B cell (primary cell): ENCODE measurements at regions of chr17 and their contacts with region 1.

Region 1: GRCh38 chr17:7306911-7307686 is at the start of gene EIF5A:
- DNase-seq: peak; percentile 100
- ATAC-seq: peak; percentile 70
- H3K4me3 ChIP-seq: peak within 1 kb of the TSS; percentile 81 to 96 (median 94)
- H3K4me3 Mint-ChIP-seq: peak within 1 kb of the TSS; percentile 95
- H3K27ac ChIP-seq: peak within 1 kb of the TSS; percentile 98 to 99
- H3K27ac Mint-ChIP-seq: peak within 1 kb of the TSS; percentile 99
- H3K4me1 ChIP-seq: peaks cover 17 to 40% of the 10 kb centered on the region in 2 donors
- H3K4me1 Mint-ChIP-seq: peaks cover 39% of the 10 kb centered on the region
- H3K27me3 ChIP-seq: no peaks in the 10 kb centered on the region
- H3K27me3 Mint-ChIP-seq: no peaks in the 10 kb centered on the region
- CTCF ChIP-seq: no peak
- total RNA-seq, gene EIF5A: 233 and 236 TPM in 2 replicates

Region 2: DNA sequence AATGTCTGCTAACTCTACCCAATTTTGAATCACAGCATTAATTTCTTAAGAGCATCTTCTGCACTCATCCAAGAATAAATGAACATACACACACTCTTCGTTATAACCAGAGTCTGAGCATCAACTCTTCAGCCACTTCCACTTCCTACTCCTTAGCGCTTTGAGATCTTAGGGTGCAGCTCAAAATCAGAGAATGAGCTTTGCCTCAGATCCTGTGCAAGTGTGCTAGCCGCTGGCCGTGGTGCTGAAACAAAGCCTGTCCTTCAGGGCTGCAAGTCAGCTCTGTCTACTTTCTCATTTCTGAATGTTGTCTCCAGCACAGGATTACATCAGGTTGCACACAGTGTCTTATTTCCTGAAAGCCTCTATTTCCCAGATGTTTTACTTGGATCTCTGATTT is 1037.6 kb before region 1 on chr17:
- CTCF ChIA-PET with region 1: no interaction called
- POLR2A ChIA-PET with region 1: no interaction called
- intact Hi-C with region 1: no loop called
- DNase-seq: no peak
- ATAC-seq: no peak
- H3K4me3 ChIP-seq: no peak overlapping the region
- H3K4me3 Mint-ChIP-seq: no peak overlapping the region
- H3K27ac ChIP-seq: no peak overlapping the region
- H3K27ac Mint-ChIP-seq: no peak overlapping the region
- H3K4me1 ChIP-seq: no peaks in the 10 kb centered on the region
- H3K4me1 Mint-ChIP-seq: no peaks in the 10 kb centered on the region
- H3K27me3 ChIP-seq: no peaks in the 10 kb centered on the region
- H3K27me3 Mint-ChIP-seq: peaks cover 6% of the 10 kb centered on the region
- CTCF ChIP-seq: no peak

Region 3: DNA sequence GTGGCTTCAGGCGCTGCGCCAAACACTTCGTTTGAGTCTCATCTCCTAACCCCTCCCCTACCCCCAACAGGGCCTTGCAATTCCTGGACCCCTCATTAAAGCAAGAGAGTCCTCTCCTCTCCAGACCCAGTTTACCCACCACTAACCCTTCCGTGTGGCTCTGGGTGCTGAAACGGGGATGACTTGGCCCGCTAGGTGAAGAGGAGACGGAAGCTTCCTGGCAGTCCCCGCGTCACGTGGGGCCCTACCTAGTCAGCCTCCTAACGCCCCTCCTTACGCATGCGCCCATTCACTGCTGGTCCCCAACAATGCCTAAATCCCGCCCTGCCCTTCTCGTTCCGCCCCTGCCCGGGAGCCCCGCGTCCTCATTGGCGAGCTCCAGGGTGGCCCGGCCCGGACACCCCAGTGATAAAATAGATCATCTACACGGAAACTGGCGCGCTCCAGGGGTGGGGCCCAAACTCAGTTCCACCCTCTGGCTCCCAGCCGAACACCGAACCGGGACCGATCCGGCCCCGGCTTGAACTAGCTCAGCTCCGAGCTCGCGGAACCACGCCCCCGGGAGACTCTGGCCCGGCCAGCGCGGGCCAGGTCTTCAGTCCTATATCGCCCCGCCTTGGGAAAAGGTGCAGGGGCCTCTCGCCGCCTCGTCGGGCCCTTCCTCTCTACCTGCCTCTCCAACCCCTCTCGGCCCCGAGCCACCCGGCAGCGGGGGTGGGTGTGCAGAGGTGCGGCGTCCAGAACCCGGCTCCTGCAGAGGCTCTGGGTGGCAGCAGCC is 271.3 kb before region 1 on chr17 and contains the start of gene SLC16A13:
- CTCF ChIA-PET with region 1: no interaction called
- POLR2A ChIA-PET with region 1: no interaction called
- intact Hi-C with region 1: loop called (anchors 2 kb)
- DNase-seq: peak; percentile 99
- ATAC-seq: peak; percentile 94
- H3K4me3 ChIP-seq: peak within 1 kb of the TSS; percentile 58 to 97 (median 88)
- H3K4me3 Mint-ChIP-seq: peak within 1 kb of the TSS; percentile 94
- H3K27ac ChIP-seq: peak within 1 kb of the TSS; percentile 86 to 100
- H3K27ac Mint-ChIP-seq: peak within 1 kb of the TSS; percentile 98
- H3K4me1 ChIP-seq: peaks cover 18 to 38% of the 10 kb centered on the region in 2 donors
- H3K4me1 Mint-ChIP-seq: peaks cover 42% of the 10 kb centered on the region
- H3K27me3 ChIP-seq: no peaks in the 10 kb centered on the region
- H3K27me3 Mint-ChIP-seq: no peaks in the 10 kb centered on the region
- CTCF ChIP-seq: no peak
- total RNA-seq, gene SLC16A13: 21.7 and 21.9 TPM in 2 replicates

Region 4: GRCh38 chr17:7214300-7215135 is 92.6 kb before region 1 on chr17:
- CTCF ChIA-PET with region 1: no interaction called
- POLR2A ChIA-PET with region 1: no interaction called
- intact Hi-C with region 1: loop called (anchors 2 kb)
- DNase-seq: peak; percentile 99
- ATAC-seq: peak; percentile 85
- H3K4me3 ChIP-seq: peak overlapping the region; percentile 39 to 66 (median 53)
- H3K4me3 Mint-ChIP-seq: peak overlapping the region; percentile 97
- H3K27ac ChIP-seq: peak overlapping the region; percentile 77 to 90
- H3K27ac Mint-ChIP-seq: peak overlapping the region; percentile 99
- H3K4me1 ChIP-seq: peaks cover 25 to 50% of the 10 kb centered on the region in 2 donors
- H3K4me1 Mint-ChIP-seq: peaks cover 49% of the 10 kb centered on the region
- H3K27me3 ChIP-seq: peaks cover 0 to 4% (median 0%) of the 10 kb centered on the region in 4 experiments
- H3K27me3 Mint-ChIP-seq: peaks cover 5% of the 10 kb centered on the region
- CTCF ChIP-seq: peak; percentile 44

Region 5: DNA sequence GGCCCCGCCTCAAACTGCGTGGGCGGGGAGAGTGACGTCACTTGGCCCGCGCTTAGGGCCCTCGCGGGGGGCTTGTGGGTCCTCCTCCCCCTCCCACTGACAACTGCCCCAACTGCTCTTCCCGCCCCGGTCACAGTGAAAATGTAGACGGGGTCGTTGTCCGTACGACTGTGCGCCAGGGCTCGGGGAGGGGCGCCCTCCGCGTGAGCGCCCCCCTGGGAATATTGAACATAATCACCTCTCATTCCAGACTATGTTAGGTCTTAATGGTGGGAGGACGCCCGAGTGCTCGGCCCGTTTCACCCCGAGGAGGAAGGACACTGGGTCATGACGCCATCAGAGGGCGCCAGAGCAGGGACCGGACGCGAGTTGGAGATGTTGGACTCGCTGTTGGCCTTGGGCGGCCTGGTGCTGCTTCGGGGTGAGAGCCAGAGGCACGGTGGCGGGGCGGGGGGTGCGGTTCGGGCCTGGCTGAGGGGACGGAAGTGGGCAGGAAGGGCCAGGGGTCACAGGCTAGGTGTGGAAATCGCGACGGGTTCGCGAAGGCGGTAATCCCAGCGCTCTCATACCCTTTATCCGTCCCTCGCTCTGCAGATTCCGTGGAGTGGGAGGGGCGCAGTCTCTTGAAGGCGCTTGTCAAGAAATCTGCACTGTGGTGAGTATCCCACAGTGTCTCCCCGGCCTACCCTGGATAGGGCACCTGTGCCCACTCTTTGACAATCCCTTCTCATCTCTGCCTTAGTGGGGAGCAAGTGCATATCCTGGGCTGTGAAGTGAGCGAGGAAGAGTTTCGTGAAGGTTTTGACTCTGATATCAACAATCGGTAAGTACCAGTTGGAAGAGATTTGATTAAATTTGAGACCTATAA is 54.7 kb before region 1 on chr17 and contains the start of gene ELP5:
- CTCF ChIA-PET with region 1: no interaction called
- POLR2A ChIA-PET with region 1: interaction called, 3 read pairs
- intact Hi-C with region 1: loop called (anchors 1 kb)
- DNase-seq: peak; percentile 100
- ATAC-seq: peak; percentile 64
- H3K4me3 ChIP-seq: peak within 1 kb of the TSS; percentile 69 to 90 (median 78)
- H3K4me3 Mint-ChIP-seq: peak within 1 kb of the TSS; percentile 98
- H3K27ac ChIP-seq: peak within 1 kb of the TSS; percentile 98 to 100
- H3K27ac Mint-ChIP-seq: peak within 1 kb of the TSS; percentile 100
- H3K4me1 ChIP-seq: peaks cover 30 to 33% of the 10 kb centered on the region in 2 donors
- H3K4me1 Mint-ChIP-seq: peaks cover 44% of the 10 kb centered on the region
- H3K27me3 ChIP-seq: no peaks in the 10 kb centered on the region
- H3K27me3 Mint-ChIP-seq: no peaks in the 10 kb centered on the region
- CTCF ChIP-seq: no peak
- total RNA-seq, gene ELP5: 42.2 and 48.0 TPM in 2 replicates

Region 6: DNA sequence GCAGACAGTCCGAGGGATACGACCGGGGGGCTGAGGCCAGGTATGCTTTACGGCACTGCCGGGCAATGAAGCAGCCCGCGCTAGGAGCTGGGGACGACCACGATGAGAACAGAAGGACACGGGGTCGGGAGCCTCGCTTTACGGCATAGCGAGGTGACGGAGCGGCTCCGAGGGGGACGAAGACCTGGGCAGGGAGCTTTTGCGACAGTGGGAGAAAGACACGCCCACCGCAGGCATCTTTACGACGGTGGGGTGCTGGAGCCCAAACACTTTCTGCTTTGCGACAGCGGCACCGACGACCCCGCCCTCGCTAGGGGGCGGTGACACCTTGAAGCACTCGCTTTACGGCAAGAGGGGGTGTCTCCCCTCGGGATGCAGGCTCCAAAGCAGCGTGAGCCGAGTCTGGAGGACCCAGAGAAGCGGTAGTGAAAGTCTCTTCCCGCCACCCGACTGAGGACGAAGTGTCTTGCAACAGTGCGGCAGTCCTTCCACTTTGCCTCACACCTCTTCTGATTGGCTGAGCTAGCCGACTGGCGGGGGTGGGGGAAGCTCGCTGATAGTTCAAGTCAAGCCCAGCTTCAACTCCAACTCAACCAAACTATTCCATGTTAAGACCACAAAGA is 22.4 kb after region 1 on chr17:
- CTCF ChIA-PET with region 1: interaction called, 5 read pairs
- POLR2A ChIA-PET with region 1: interaction called, 18 read pairs
- intact Hi-C with region 1: loop called (anchors 1 kb)
- DNase-seq: peak; percentile 100
- ATAC-seq: peak; percentile 71
- H3K4me3 ChIP-seq: peak overlapping the region; percentile 65 to 92 (median 81)
- H3K4me3 Mint-ChIP-seq: peak overlapping the region; percentile 96
- H3K27ac ChIP-seq: peak overlapping the region; percentile 86 to 93
- H3K27ac Mint-ChIP-seq: peak overlapping the region; percentile 98
- H3K4me1 ChIP-seq: peaks cover 23 to 46% of the 10 kb centered on the region in 2 donors
- H3K4me1 Mint-ChIP-seq: peaks cover 40% of the 10 kb centered on the region
- H3K27me3 ChIP-seq: no peaks in the 10 kb centered on the region
- H3K27me3 Mint-ChIP-seq: no peaks in the 10 kb centered on the region
- CTCF ChIP-seq: no peak

Region 7: GRCh38 chr17:7454980-7455379 is 147.9 kb after region 1 on chr17:
- CTCF ChIA-PET with region 1: no interaction called
- POLR2A ChIA-PET with region 1: no interaction called
- intact Hi-C with region 1: loop called (anchors 5 kb)
- DNase-seq: no peak
- ATAC-seq: no peak
- H3K4me3 ChIP-seq: peak overlapping the region; percentile 55 to 99 (median 90)
- H3K4me3 Mint-ChIP-seq: peak overlapping the region; percentile 91
- H3K27ac ChIP-seq: no peak overlapping the region
- H3K27ac Mint-ChIP-seq: peak overlapping the region; percentile 81
- H3K4me1 ChIP-seq: peaks cover 5 to 10% of the 10 kb centered on the region in 2 donors
- H3K4me1 Mint-ChIP-seq: peaks cover 11% of the 10 kb centered on the region
- H3K27me3 ChIP-seq: no peaks in the 10 kb centered on the region
- H3K27me3 Mint-ChIP-seq: peaks cover 4% of the 10 kb centered on the region
- CTCF ChIP-seq: no peak

Region 8: DNA sequence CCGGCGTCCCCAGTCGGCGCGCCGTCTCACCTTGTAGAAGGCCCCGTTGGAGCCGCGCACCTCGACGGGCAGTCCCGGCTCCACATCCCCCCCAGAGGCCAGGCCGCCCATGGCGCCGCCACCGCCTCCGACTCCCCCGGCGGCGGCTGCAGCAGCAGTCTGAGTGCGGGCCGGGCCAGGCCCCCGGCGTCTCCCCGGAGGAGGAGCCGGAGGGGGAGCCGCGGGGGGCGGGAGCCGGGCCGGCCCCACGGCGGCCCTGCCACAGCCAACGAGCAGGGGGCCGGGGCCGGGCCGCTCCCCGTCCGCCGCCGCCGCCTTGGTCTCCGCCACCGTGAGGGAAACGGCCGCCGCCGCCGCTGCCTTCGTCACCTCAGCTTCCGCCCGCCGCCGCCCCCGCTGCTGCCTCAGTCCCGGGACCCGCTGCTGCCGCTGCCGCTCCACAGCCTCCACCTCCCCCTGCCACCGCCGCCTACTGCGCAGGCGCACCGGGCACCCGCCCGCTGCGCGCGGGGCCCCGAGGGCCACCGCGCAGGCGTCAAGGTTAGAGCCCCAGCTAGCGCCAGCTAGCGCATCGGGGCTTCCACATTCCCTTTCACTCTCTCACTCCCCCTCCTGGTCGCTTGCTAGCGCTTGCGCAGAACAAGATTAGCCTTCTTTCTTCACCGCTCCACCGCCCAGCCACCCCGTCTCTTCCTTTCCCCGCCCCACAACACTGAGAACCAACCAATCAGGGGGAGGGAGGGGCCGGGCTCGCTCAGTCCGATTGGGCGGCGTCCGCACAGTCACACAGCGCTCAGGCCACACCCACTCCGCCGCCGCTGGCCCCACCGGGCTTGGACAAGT is 307.5 kb after region 1 on chr17 and contains the start of gene FXR2:
- CTCF ChIA-PET with region 1: no interaction called
- POLR2A ChIA-PET with region 1: no interaction called
- intact Hi-C with region 1: loop called (anchors 1 kb)
- DNase-seq: peak; percentile 100
- ATAC-seq: peak; percentile 89
- H3K4me3 ChIP-seq: peak within 1 kb of the TSS; percentile 73 to 82 (median 76)
- H3K4me3 Mint-ChIP-seq: peak within 1 kb of the TSS; percentile 88
- H3K27ac ChIP-seq: peak within 1 kb of the TSS; percentile 67 to 85
- H3K27ac Mint-ChIP-seq: peak within 1 kb of the TSS; percentile 93
- H3K4me1 ChIP-seq: peaks cover 12 to 26% of the 10 kb centered on the region in 2 donors
- H3K4me1 Mint-ChIP-seq: peaks cover 22% of the 10 kb centered on the region
- H3K27me3 ChIP-seq: no peaks in the 10 kb centered on the region
- H3K27me3 Mint-ChIP-seq: no peaks in the 10 kb centered on the region
- CTCF ChIP-seq: peak; percentile 64
- total RNA-seq, gene FXR2: 44.7 and 45.8 TPM in 2 replicates